Naive thymus-derived CD4-positive, alpha-beta T cell (primary cell): ENCODE measurements at regions of chr11 and their contacts with region 1.

Region 1: GRCh38 chr11:126268708-126269579 is at the starts of genes FOXRED1 and SRPRA:
- DNase-seq: peak; percentile 98 to 100 (median 100)
- ATAC-seq: peak; percentile 100
- H3K4me3 ChIP-seq: peak within 1 kb of the TSS; percentile 99
- H3K4me3 Mint-ChIP-seq: peak within 1 kb of the TSS; percentile 91 to 98 (median 97)
- H3K27ac ChIP-seq: peak within 1 kb of the TSS; percentile 94
- H3K27ac Mint-ChIP-seq: peak within 1 kb of the TSS; percentile 94 to 99 (median 98)
- H3K4me1 ChIP-seq: peaks cover 22 to 23% of the 10 kb centered on the region in 2 donors
- H3K4me1 Mint-ChIP-seq: peaks cover 26 to 60% (median 47%) of the 10 kb centered on the region in 7 donors
- H3K27me3 ChIP-seq: no peaks in the 10 kb centered on the region
- H3K27me3 Mint-ChIP-seq: no peaks in the 10 kb centered on the region
- total RNA-seq, gene FOXRED1: 27.5 to 42.7 (median 35.5) TPM
- total RNA-seq, gene SRPRA: 141 to 179 (median 150) TPM

Region 2: DNA sequence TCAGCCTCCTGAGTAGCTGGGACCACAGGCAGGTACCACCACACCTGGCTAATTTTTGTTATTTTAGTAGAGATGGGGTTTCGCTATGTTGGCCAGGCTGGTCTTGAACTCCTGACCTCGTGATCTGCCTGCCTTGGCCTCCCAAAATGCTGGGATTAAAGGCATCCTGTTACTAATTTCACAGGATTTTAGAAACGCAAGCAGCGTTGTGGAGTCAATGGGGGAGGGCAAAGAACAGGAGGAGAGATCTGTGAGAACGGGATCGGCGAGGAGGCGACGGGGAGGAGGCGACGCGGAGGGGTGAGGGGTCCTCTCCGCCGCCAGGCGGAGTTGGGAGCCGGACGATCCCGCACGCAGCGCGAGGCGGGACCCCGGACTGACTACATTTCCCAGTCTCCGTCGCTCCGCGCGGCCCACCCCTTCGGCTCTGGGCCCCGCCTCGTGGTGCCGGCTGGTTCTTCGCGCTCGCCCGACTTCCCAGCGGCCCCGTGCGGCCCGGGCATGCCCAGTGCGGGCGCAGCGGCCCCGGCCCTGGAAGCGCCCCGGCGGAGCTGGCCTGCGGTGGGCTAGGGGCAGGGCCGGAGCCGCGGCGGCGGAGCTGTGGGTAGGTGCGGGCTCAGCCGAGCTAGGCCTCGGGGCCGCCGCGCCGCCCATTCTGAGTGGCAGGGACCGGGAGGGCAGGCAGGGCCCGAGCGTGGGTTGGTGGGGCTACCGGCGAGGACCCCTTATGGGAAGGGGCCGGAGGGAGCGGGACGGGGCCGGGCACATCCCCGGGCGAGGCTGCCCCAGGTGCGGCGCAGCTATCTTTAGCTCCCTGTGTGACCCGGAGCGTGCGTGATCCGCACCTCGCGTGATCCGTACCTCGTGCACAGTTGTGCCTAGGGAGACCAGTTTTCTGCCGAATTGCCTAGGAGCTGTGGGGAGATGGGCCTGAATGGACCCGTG is 699.7 kb before region 1 on chr11 and contains the start of gene EI24:
- CTCF ChIA-PET with region 1: no interaction called
- POLR2A ChIA-PET with region 1: no interaction called
- intact Hi-C with region 1: loop called in 1 of 2 experiments (anchors 2 kb)
- DNase-seq: peak; percentile 73 to 89 (median 81)
- ATAC-seq: peak; percentile 99
- H3K4me3 ChIP-seq: peak within 1 kb of the TSS; percentile 90
- H3K4me3 Mint-ChIP-seq: peak within 1 kb of the TSS; percentile 90 to 97 (median 94)
- H3K27ac ChIP-seq: peak within 1 kb of the TSS; percentile 90
- H3K27ac Mint-ChIP-seq: peak within 1 kb of the TSS; percentile 78 to 96 (median 91)
- H3K4me1 ChIP-seq: peaks cover 13 to 16% of the 10 kb centered on the region in 2 donors
- H3K4me1 Mint-ChIP-seq: peaks cover 12 to 38% (median 26%) of the 10 kb centered on the region in 7 donors
- H3K27me3 ChIP-seq: no peaks in the 10 kb centered on the region
- H3K27me3 Mint-ChIP-seq: no peaks in the 10 kb centered on the region
- total RNA-seq, gene EI24: 21.3 to 42.7 (median 35.7) TPM

Region 3: GRCh38 chr11:125625630-125626287 is 643.2 kb before region 1 on chr11:
- CTCF ChIA-PET with region 1: no interaction called
- POLR2A ChIA-PET with region 1: interaction called, 3 read pairs
- intact Hi-C with region 1: loop called in 1 of 2 experiments (anchors 2 kb)
- DNase-seq: peak; percentile 70 to 87 (median 82)
- ATAC-seq: peak; percentile 95
- H3K4me3 ChIP-seq: peak overlapping the region; percentile 91
- H3K4me3 Mint-ChIP-seq: peak overlapping the region; percentile 82 to 99 (median 98)
- H3K27ac ChIP-seq: peak overlapping the region; percentile 96
- H3K27ac Mint-ChIP-seq: peak overlapping the region; percentile 64 to 99 (median 98)
- H3K4me1 ChIP-seq: peaks cover 0 to 5% of the 10 kb centered on the region in 2 donors
- H3K4me1 Mint-ChIP-seq: peaks cover 13 to 47% (median 15%) of the 10 kb centered on the region in 7 donors
- H3K27me3 ChIP-seq: no peaks in the 10 kb centered on the region
- H3K27me3 Mint-ChIP-seq: no peaks in the 10 kb centered on the region

Region 4: GRCh38 chr11:125923012-125923579 is 345.8 kb before region 1 on chr11:
- CTCF ChIA-PET with region 1: interaction called, 5 read pairs
- POLR2A ChIA-PET with region 1: no interaction called
- intact Hi-C with region 1: loop called in 1 of 2 experiments (anchors 2 kb)
- DNase-seq: peak in 8 of 9 donors; percentile 39 to 65 (median 60)
- ATAC-seq: peak; percentile 71
- H3K4me3 ChIP-seq: no peak overlapping the region
- H3K4me3 Mint-ChIP-seq: no peak overlapping the region
- H3K27ac ChIP-seq: no peak overlapping the region
- H3K27ac Mint-ChIP-seq: no peak overlapping the region
- H3K4me1 ChIP-seq: no peaks in the 10 kb centered on the region
- H3K4me1 Mint-ChIP-seq: peaks cover 0 to 4% (median 0%) of the 10 kb centered on the region in 7 donors
- H3K27me3 ChIP-seq: no peaks in the 10 kb centered on the region
- H3K27me3 Mint-ChIP-seq: peaks cover 14 to 35% (median 19%) of the 10 kb centered on the region in 5 donors

Region 5: DNA sequence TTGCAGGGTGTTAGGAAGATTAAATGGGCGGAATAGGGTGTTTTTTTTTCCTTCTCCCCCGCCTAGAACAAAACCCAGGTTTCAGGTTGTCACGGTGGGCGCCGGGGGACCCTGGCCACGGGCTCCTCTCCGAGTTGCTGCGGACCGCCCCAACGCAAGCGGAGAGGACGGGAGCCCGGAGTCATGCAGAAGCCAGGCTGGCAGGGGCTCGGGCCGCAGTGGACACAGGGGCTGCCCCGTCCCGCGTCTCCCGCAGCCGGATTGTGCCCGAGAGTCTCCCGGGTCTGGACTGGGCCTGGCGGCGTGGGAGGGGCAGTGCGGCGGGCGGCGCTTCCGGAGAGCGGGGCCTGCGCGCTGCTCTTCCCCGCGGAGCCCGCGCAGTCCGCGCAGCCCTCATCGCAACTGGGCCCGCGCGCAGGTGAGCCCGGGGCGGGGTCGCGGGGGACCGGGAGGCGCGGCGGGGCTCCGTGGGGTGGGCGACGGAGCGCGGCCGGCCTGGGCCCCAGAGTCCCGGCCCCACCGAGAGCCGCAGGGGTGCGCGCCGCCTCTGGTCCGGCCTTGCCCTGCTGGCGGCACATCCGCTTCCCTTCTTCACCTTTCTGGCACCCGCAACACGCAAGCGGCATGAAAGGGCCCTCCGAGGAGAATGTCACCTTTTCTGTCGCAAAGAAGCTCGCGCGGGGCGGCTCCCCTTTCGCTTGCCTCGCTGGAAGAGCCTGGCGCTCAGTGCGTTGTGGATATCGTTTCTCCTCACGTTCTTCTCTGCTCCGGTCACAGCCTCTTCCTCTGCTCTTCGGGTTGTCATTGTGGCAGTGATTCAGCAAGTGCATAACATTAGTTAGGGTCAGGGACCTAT is 14.0 kb after region 1 on chr11 and contains the start of gene TIRAP:
- CTCF ChIA-PET with region 1: interaction called, 9 read pairs
- POLR2A ChIA-PET with region 1: interaction called, 122 read pairs
- intact Hi-C with region 1: loop called (anchors 1 kb)
- DNase-seq: peak; percentile 55 to 77 (median 75)
- ATAC-seq: peak; percentile 79
- H3K4me3 ChIP-seq: peak within 1 kb of the TSS; percentile 77
- H3K4me3 Mint-ChIP-seq: peak within 1 kb of the TSS; percentile 88 to 100 (median 98)
- H3K27ac ChIP-seq: peak within 1 kb of the TSS; percentile 86
- H3K27ac Mint-ChIP-seq: peak within 1 kb of the TSS; percentile 93 to 99 (median 97)
- H3K4me1 ChIP-seq: peaks cover 16 to 28% of the 10 kb centered on the region in 2 donors
- H3K4me1 Mint-ChIP-seq: peaks cover 35 to 62% (median 55%) of the 10 kb centered on the region in 7 donors
- H3K27me3 ChIP-seq: no peaks in the 10 kb centered on the region
- H3K27me3 Mint-ChIP-seq: no peaks in the 10 kb centered on the region
- total RNA-seq, gene TIRAP: 12.9 to 21.5 (median 17.9) TPM

Region 6: GRCh38 chr11:126355324-126355925 is 86.5 kb after region 1 on chr11 and contains the start of gene ST3GAL4:
- CTCF ChIA-PET with region 1: no interaction called
- POLR2A ChIA-PET with region 1: interaction called, 3 read pairs
- intact Hi-C with region 1: loop called in 1 of 2 experiments (anchors 1 kb)
- DNase-seq: peak; percentile 8 to 83 (median 36)
- ATAC-seq: peak; percentile 77
- H3K4me3 ChIP-seq: peak within 1 kb of the TSS; percentile 74
- H3K4me3 Mint-ChIP-seq: peak within 1 kb of the TSS; percentile 77 to 95 (median 88)
- H3K27ac ChIP-seq: peak within 1 kb of the TSS; percentile 51
- H3K27ac Mint-ChIP-seq: peak within 1 kb of the TSS in 8 of 9 donors; percentile 19 to 91 (median 62)
- H3K4me1 ChIP-seq: peaks cover 8 to 14% of the 10 kb centered on the region in 2 donors
- H3K4me1 Mint-ChIP-seq: peaks cover 21 to 46% (median 29%) of the 10 kb centered on the region in 7 donors
- H3K27me3 ChIP-seq: no peaks in the 10 kb centered on the region
- H3K27me3 Mint-ChIP-seq: no peaks in the 10 kb centered on the region
- total RNA-seq, gene ST3GAL4: 2.7 to 13.4 (median 4.7) TPM

Region 7: DNA sequence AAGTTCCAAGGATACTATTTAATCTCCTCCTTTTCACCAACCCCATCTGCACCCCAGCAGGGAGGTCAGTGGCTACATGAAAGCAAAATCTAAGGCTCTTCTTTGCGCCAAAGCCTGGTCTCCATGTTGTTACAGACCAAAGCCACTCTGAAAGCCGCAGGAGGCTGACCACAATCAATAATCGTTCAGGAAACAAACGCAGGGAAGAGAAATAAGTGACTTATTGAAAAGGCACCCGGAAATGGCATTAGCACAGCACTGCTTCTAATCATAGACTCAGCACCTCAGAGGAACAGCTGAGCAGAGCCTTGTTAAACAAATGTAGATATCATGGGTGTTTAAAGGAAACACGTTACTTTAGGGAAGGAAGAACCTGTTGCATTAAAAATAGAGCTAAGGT is 547.7 kb after region 1 on chr11:
- CTCF ChIA-PET with region 1: no interaction called
- POLR2A ChIA-PET with region 1: no interaction called
- intact Hi-C with region 1: no loop called
- DNase-seq: no peak
- ATAC-seq: no peak
- H3K4me3 ChIP-seq: no peak overlapping the region
- H3K4me3 Mint-ChIP-seq: no peak overlapping the region
- H3K27ac ChIP-seq: no peak overlapping the region
- H3K27ac Mint-ChIP-seq: no peak overlapping the region
- H3K4me1 ChIP-seq: no peaks in the 10 kb centered on the region
- H3K4me1 Mint-ChIP-seq: peaks cover 0 to 5% (median 0%) of the 10 kb centered on the region in 7 donors
- H3K27me3 ChIP-seq: no peaks in the 10 kb centered on the region
- H3K27me3 Mint-ChIP-seq: peaks cover 0 to 33% (median 5%) of the 10 kb centered on the region in 5 donors